Thyroid gland (tissue), 4 donors: ENCODE measurements at regions of chr4 and their contacts with region 1.

Region 1: DNA sequence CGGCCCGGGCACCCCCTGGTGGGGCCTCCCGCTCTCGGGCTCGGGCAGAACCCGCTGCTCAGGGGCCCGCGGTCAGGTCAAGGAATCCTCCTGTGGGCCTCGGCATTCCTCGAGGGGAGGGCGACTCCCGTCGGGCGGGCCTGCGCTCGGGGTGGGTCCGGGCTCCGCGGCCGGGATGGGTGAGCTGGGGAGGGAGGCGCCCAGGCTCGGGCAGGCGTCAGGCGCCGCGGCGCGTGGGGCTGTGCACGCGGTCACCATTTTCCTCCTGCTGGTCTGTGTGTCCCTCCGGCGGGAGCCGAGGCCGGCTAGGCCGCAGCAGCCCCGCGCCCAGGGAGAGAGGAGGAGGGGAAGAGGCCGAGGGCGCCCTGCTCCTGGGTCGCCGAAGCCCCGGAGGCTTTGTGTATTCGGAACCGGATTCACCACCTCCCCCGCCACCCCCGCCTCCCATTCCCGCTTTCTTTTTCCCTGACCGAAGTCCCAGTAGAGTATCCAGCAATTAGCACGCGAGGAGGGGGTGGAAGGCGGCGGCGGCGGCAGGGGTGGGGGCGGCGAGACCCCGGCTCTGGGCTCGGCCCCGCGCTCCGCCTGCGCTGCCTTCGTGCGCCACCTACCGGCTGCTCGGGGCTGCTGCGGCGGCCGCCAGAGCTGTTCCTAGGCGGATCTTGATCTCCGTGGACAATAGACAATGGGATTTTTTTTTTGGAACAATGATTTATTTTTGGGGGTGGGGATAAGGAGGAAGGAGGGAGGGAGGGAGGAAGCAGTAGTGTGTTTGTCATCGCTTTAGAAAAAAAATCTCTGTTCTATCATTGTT is 99.0 kb upstream of the MAML3 start:
- DNase-seq: peak; percentile 71 to 74
- H3K4me3 ChIP-seq: peak overlapping the region in 2 of 3 donors; percentile 39 to 64
- H3K27ac ChIP-seq: peak overlapping the region; percentile 95 to 97 (median 97)
- H3K4me1 ChIP-seq: peaks cover 10 to 23% of the 10 kb centered on the region in 2 donors
- H3K27me3 ChIP-seq: no peaks in the 10 kb centered on the region
- CTCF ChIP-seq: peak; percentile 42 to 97 (median 88)
- POLR2A ChIP-seq: peak in 1 of 2 donors; percentile 45

Region 2: GRCh38 chr4:139734875-139735380 is 518.0 kb before region 1 on chr4:
- intact Hi-C with region 1: loop called (anchors 2 kb)
- DNase-seq: peak; percentile 92 to 93
- H3K4me3 ChIP-seq: peak overlapping the region; percentile 3 to 50 (median 49)
- H3K27ac ChIP-seq: peak overlapping the region; percentile 48 to 84 (median 72)
- H3K4me1 ChIP-seq: peaks cover 13 to 24% of the 10 kb centered on the region in 2 donors
- H3K27me3 ChIP-seq: no peaks in the 10 kb centered on the region
- CTCF ChIP-seq: peak; percentile 61 to 95 (median 81)
- POLR2A ChIP-seq: peak in 1 of 2 donors; percentile 46

Region 3: DNA sequence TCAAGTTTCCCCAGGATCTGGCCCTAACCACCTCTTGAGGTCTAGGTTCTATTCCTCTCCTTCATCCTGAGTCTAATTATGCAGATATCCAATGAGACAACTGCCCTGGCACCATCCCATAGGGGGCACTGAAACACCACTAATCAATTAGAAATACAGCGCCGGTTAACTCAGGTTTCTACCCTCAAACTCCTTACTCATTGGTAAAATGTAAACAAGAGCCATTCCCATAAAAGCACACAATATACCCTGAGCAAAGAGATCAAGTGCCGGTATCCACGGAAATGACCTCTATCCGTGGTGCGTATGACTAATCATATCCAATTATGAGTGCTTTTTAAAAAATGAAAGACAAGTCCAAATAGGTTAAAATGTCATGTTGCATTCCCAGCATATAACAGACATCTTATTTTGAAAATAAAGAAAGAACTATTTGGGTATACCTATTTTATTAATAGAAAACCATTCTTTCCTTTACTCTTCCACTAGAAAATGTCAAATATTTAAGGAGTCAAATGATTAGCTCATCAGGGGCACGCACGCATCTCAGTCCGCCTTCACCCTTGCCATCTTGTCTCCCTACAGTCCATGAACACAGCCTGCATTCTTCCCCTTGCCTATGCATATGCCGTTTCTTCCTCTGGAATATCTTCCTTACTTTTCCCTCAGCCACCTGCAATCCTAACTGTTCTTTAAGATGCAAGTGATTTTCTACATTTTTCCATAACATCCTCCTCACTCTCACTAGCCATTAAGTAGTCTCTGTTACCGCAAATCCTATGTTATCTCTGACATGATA is 240.1 kb before region 1 on chr4:
- intact Hi-C with region 1: loop called (anchors 5 kb)
- DNase-seq: peak; percentile 68 to 73
- H3K4me3 ChIP-seq: no peak overlapping the region
- H3K27ac ChIP-seq: no peak overlapping the region
- H3K4me1 ChIP-seq: no peaks in the 10 kb centered on the region
- H3K27me3 ChIP-seq: no peaks in the 10 kb centered on the region
- CTCF ChIP-seq: peak in 4 of 6 experiments; percentile 57 to 77 (median 73)
- POLR2A ChIP-seq: no peak

Region 4: GRCh38 chr4:140052050-140052449 is 200.9 kb before region 1 on chr4:
- intact Hi-C with region 1: loop called (anchors 5 kb)
- DNase-seq: peak; percentile 64 to 68
- H3K4me3 ChIP-seq: no peak overlapping the region
- H3K27ac ChIP-seq: no peak overlapping the region
- H3K4me1 ChIP-seq: peaks cover 0 to 14% of the 10 kb centered on the region in 2 donors
- H3K27me3 ChIP-seq: no peaks in the 10 kb centered on the region
- CTCF ChIP-seq: peak in 5 of 6 experiments; percentile 27 to 60 (median 47)
- POLR2A ChIP-seq: no peak

Region 5: DNA sequence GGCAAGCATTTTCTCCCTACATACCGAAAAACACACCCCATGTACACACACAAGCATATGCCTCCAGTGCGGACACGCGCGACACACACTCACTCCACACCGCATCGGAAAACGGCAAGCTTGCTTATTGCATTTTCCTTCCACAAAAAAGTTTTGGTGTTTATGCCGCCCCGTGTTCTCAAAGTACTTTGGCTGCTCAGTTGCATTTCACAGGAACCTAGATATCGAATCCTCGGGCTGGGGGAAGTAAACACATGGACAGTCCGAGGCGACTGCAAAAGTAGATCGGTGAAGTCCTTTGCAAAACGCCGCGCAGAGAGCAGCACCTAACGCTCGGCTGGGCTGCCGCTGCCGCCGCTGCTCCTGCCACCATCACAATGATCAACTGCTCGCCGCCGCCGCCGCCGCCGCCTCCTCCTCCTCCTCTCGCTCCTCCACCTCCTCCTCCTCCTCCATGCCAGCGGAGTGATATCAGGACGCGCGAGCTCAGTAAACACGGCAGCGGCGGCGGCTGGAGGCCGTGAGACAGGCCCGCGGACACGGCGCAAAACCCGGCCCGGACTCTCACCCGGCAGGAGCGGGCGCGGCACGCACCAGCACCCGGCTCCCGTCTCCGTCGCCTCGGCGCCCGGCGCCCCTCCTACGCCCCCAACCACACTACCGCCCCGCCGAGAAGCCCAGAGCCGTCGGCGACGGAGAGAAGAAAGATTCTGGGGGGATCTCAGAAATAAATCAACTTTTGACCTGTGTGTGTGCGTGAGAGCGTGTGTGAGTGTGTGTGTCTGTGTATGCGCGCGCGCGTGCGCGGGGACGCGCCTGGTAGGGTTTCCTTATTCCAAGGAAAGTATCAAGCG is 99.0 kb before region 1 on chr4 and contains the start of gene MAML3:
- intact Hi-C with region 1: loop called (anchors 2 kb)
- DNase-seq: peak; percentile 95 to 97
- H3K4me3 ChIP-seq: peak within 1 kb of the TSS; percentile 85 to 91 (median 89)
- H3K27ac ChIP-seq: peak within 1 kb of the TSS; percentile 98 to 100 (median 98)
- H3K4me1 ChIP-seq: peaks cover 0 to 3% of the 10 kb centered on the region in 2 donors
- H3K27me3 ChIP-seq: no peaks in the 10 kb centered on the region
- CTCF ChIP-seq: peak in 1 of 6 experiments; percentile 2
- POLR2A ChIP-seq: peak; percentile 52 to 95
- total RNA-seq, gene MAML3: 5.7 to 14.1 (median 11.4) TPM